Endothelial cell of umbilical vein (primary cell): ENCODE measurements at regions of chr18 and their contacts with region 1.

Region 1: DNA sequence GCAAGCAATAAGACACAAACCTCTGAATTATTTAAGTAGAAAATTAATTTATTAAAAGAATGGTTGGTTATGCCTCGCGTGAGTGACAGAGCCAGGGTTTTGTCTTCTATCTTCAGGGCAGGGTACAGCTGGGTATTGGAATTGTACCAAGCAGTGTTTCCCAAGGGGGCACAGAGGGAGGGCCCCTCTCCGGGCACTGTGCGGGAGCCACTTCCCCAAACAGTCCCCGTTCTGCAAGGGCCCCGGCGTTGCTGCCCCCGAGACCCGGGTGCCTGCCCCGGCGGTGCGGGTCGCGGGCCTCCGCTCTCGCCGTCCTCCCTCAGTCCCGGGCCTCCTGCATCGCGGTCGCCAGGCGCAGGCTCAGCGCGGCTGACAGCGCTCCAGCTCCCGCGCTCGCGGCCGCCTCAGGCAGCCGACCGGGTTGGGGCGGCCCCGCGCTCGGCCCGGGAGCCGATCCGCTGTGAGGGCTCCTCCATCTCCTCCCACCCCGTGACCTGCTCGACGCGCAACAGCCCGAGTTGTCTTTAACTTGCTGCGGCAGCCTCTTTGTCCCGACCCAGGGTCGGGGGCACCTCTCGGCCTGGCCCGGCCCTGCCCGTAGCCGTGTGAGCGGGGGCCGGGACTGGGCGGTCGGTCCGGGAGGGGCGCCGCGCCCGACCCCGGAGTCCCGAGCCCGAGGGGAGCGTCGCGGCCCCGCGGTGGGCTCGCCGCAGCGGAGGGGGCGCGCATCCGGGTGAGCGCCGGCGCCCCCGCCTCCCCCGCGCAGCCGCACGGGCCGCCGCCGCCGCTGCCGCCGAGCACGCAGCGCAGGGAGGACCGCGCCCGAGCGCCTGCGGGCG is 620 bp upstream of the GALNT1 start:
- DNase-seq: peak; percentile 58
- H3K4me3 ChIP-seq: peak overlapping the region; percentile 67 to 70 (median 67)
- H3K27ac ChIP-seq: peak overlapping the region; percentile 84
- H3K4me1 ChIP-seq: peaks cover 11% of the 10 kb centered on the region
- H3K27me3 ChIP-seq: no peaks in the 10 kb centered on the region
- CTCF ChIP-seq: no peak
- POLR2A ChIP-seq: no peak

Region 2: GRCh38 chr18:35231052-35231451 is 349.9 kb before region 1 on chr18:
- CTCF ChIA-PET with region 1: no interaction called
- POLR2A ChIA-PET with region 1: no interaction called
- dilution Hi-C with region 1: no loop called
- intact Hi-C with region 1: loop called (anchors 10 kb)
- DNase-seq: peak; percentile 79
- H3K4me3 ChIP-seq: no peak overlapping the region
- H3K27ac ChIP-seq: no peak overlapping the region
- H3K4me1 ChIP-seq: no peaks in the 10 kb centered on the region
- H3K27me3 ChIP-seq: no peaks in the 10 kb centered on the region
- CTCF ChIP-seq: peak; percentile 78 to 82
- POLR2A ChIP-seq: no peak

Region 3: GRCh38 chr18:35371412-35372195 is 209.3 kb before region 1 on chr18:
- CTCF ChIA-PET with region 1: no interaction called
- POLR2A ChIA-PET with region 1: no interaction called
- dilution Hi-C with region 1: no loop called
- intact Hi-C with region 1: no loop called
- DNase-seq: no peak
- H3K4me3 ChIP-seq: no peak overlapping the region
- H3K27ac ChIP-seq: no peak overlapping the region
- H3K4me1 ChIP-seq: peaks cover 5% of the 10 kb centered on the region
- H3K27me3 ChIP-seq: peaks cover 0 to 1% of the 10 kb centered on the region in 2 experiments
- CTCF ChIP-seq: no peak
- POLR2A ChIP-seq: no peak

Region 4: DNA sequence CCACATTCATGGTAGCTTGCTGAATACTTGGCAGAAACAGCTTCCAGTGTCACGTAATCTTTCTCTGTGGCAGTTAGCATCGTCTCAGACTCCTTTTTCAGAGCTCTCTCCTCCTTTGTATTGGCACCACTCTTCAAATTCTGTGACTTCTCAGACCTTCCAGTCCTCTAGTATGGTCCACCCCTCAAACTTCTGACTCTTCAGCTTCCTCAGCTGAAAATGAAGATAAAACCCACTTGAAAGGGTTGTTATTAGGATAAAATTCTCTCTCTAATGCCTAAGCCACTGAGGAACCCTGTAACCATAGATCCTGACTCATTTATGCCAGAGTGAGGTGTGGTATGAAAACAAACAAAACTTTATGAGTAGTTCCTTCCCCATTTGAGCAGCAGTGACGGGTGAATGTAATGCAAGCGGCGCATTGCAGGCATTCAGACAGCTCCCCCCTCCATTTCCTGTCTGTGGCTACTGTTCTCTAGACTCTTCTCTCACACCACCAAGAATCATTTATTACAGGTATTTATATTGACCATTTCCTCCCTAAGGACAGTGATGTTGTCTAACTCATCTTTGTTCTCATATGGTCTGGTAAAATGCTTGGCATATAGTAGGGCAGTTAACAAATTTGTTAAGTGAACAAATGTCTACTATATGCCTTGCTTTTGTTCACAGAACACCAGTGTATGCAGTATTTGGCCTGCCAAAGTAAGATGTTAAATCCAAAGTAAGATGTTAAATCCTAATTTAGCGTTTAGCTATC is 35.9 kb after region 1 on chr18:
- CTCF ChIA-PET with region 1: interaction called, 3 read pairs
- POLR2A ChIA-PET with region 1: interaction called, 5 read pairs
- dilution Hi-C with region 1: no loop called
- intact Hi-C with region 1: loop called (anchors 2 kb)
- DNase-seq: peak; percentile 95
- H3K4me3 ChIP-seq: peak overlapping the region in 1 of 3 experiments; percentile 54
- H3K27ac ChIP-seq: peak overlapping the region; percentile 98
- H3K4me1 ChIP-seq: peaks cover 83% of the 10 kb centered on the region
- H3K27me3 ChIP-seq: no peaks in the 10 kb centered on the region
- CTCF ChIP-seq: no peak
- POLR2A ChIP-seq: peak; percentile 52

Region 5: GRCh38 chr18:35972197-35973052 is 391.5 kb after region 1 on chr18 and contains the start of gene RMP24:
- CTCF ChIA-PET with region 1: no interaction called
- POLR2A ChIA-PET with region 1: no interaction called
- dilution Hi-C with region 1: no loop called
- intact Hi-C with region 1: loop called (anchors 10 kb)
- DNase-seq: peak; percentile 89
- H3K4me3 ChIP-seq: peak within 1 kb of the TSS; percentile 83 to 99 (median 91)
- H3K27ac ChIP-seq: peak within 1 kb of the TSS; percentile 91
- H3K4me1 ChIP-seq: peaks cover 18% of the 10 kb centered on the region
- H3K27me3 ChIP-seq: peaks cover 4% of the 10 kb centered on the region in 2 experiments
- CTCF ChIP-seq: no peak
- POLR2A ChIP-seq: peak; percentile 78